Naive thymus-derived CD8-positive, alpha-beta T cell (primary cell): ENCODE measurements at regions of chr19 and their contacts with region 1.

Region 1: DNA sequence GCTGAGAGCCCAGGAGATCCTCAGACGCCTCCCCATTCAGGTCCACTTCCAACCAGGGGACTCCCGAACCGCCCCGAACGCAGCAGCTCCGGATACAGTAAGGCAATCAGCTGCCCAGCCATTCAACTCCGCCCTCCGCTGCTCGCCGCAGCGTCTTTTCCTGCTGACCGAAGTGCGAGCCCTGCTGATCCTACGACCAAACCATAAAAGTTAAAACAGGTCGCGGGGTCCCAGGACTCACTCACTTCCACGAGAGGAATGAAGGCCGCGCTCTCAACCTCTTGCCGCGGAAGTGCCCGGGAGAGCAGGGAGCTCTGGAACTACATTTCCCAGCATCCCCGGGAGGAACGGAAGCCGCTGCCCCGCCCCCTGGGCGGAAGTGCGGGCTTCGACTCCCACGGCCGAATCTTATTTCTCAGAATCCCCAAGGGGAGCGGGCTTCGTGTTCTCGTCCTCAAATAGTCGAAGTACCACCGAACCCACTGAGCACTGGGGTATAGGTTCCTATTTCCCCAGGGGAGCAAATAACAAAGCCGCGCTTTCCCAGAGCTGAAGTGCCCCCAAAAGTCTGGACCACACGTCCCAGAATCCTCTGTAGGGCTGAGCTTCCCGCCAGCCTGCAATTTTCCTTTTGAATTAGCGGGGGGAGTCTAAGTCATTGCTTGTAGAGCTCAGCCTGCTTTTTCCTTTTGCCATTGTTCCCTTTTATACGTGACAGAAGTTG is at the start of gene ZNF45:
- DNase-seq: peak; percentile 74 to 92 (median 84)
- ATAC-seq: peak; percentile 94 to 95
- H3K4me3 Mint-ChIP-seq: peak within 1 kb of the TSS; percentile 88 to 97 (median 94)
- H3K27ac Mint-ChIP-seq: peak within 1 kb of the TSS; percentile 77 to 98 (median 94)
- H3K4me1 Mint-ChIP-seq: peaks cover 10 to 31% (median 24%) of the 10 kb centered on the region in 4 donors
- H3K27me3 Mint-ChIP-seq: peaks cover 0 to 8% (median under 1%) of the 10 kb centered on the region in 5 donors
- polyA plus RNA-seq, gene ZNF45: 6.3 to 16.6 (median 11.1) TPM

Region 2: DNA sequence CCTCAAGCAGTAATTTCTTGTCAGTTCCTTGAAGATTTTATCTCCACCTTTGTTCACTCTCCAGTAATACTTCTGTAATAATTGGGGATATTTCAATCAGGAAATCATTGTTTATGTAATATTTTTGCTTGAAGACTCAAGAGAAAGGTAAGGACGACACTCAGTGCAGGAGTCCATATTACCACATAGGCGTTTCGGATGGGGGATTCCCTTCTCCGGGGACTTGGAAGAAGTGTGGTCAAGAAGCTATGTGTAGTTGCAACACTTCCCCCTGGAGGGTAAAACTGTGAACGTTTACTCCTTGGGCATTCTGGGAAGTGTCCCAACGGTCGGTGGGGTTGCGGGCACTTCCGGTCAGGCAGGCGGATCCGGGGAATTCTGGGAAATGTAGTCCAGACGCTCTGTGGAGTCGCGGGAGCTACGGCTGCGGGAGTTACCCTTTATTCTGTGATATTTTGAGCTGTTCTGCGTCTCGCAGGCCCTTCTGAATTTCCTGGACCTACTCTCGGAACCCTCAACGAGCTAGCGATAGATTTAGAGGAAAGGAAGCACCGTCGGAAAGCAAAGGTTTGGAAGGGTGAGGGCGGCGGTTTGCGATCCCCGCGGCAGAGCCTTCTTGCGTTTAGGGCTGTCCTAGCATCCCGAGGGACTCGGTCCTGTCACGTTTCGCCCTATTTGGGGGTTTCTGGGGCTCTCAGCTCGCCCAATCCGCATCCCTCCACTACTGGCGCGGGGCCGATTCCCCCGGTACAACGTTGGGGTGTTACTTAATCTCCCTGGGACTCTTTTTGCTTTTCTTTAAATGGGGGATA is 15.9 kb after region 1 on chr19 and contains the start of gene ZNF221:
- POLR2A ChIA-PET with region 1: interaction called, 18 read pairs
- DNase-seq: peak; percentile 18 to 77 (median 42)
- ATAC-seq: peak; percentile 76 to 86
- H3K4me3 Mint-ChIP-seq: peak within 1 kb of the TSS; percentile 91 to 98 (median 96)
- H3K27ac Mint-ChIP-seq: peak within 1 kb of the TSS; percentile 79 to 93 (median 90)
- H3K4me1 Mint-ChIP-seq: peaks cover 3 to 11% (median 9%) of the 10 kb centered on the region in 4 donors
- H3K27me3 Mint-ChIP-seq: peaks cover 9 to 31% (median 20%) of the 10 kb centered on the region in 5 donors
- polyA plus RNA-seq, gene ZNF221: 1.6 TPM in 1 of 3 donors, not detected in the others